Cardiac septum (tissue), 1 donor: ENCODE measurements at regions of chr10 and their contacts with region 1.

Region 1: GRCh38 chr10:114623661-114624294 is 34.3 kb downstream of the ABLIM1 start:
- DNase-seq: no peak

Region 2: DNA sequence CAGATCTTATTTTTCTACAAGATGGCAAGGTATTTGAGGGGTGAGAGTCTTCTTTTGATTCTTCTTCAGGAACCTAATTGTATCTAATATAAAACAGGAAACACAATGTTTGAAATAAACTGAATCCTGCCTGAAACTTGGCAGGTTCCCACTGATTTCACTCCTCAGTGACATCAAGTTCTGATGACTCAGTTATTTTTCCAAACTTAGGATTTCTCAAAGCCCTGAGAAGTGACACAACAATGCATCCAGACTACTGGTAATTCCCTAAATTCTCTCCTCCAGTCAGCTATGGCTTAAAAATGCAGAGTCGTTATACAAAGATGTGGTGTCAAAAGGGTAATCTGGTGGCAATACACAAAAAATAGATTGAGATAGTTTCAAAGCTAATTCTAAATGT is 46.6 kb before region 1 on chr10:
- intact Hi-C with region 1: loop called (anchors 10 kb)
- DNase-seq: no peak

Region 3: GRCh38 chr10:114714281-114714741 is 90.5 kb after region 1 on chr10:
- intact Hi-C with region 1: no loop called
- DNase-seq: no peak